Activated CD4-positive, alpha-beta memory T cell treated with anti-CD3 and anti-CD28 coated beads for 36 hours (primary cell): ENCODE measurements at regions of chr5 and their contacts with region 1.

Region 1: DNA sequence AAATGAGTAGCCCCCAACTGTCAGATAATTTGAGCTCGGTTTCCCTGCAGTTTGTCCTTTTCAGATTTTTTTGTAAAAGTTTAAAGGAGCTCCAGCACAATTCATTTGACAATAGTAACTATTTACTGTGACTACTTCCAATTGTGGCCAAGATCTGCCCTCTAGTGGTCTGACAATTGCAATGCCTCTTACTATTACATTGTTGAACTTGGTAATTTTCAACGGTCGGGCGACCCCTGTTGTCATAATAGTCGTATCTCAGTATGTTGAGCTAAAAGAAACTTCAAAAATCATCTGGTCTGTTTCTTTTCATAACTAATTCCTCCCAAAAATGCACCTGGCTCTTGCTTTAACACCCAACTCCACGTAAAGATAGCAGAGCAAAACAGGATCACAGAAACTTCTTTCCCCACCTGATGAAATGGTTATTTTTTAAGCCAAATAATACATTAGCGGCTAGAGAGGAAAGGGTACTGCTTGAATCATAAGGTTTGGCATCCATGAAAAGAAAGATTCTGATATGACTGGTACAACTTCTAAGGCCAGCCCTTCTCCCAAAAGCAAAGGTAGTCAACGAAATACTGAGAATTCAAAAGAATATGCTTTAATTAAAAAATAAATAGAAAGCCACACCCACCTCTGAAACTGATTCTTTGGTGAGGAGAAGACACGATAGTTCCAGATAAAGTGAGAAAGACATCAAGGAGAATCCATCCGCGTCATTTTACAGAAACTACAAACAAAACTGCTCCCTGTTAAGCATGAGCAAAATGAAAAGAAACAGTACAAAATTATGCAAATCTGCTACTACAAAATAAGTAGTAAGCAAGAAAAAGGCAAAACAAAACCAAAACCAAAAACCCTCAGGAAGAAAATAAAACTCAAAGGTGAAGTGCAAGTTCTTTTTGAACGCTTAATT is 76.9 kb upstream of the HTR4 start:
- DNase-seq: peak; percentile 73
- H3K4me3 Mint-ChIP-seq: peak overlapping the region; percentile 47
- H3K27ac Mint-ChIP-seq: no peak overlapping the region
- H3K4me1 Mint-ChIP-seq: peaks cover 12% of the 10 kb centered on the region
- H3K27me3 Mint-ChIP-seq: peaks cover 1% of the 10 kb centered on the region

Region 2: GRCh38 chr5:148179234-148179824 is 551.9 kb before region 1 on chr5:
- CTCF ChIA-PET with region 1: interaction called, 48 read pairs
- POLR2A ChIA-PET with region 1: no interaction called
- intact Hi-C with region 1: loop called (anchors 1 kb)
- DNase-seq: no peak
- H3K4me3 Mint-ChIP-seq: no peak overlapping the region
- H3K27ac Mint-ChIP-seq: no peak overlapping the region
- H3K4me1 Mint-ChIP-seq: no peaks in the 10 kb centered on the region
- H3K27me3 Mint-ChIP-seq: peaks cover 7% of the 10 kb centered on the region

Region 3: DNA sequence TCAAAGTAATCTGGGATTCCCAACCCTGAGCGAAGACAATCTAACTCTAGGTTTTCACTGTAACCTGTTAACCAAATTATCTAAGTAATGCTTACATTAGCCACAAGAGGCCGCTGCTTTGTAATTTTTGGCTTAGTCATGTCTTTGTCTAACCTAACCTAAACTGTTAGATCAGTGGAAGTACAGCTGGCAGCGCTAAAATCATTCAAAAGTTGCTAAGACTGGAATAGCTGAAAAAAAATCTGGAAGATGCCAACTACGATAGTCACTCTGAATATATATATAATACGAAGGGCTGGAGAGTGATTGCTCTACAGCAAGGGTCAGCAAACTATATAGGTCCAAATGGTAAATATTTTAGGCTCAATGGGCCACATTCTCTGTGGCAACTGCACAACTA is 287.2 kb before region 1 on chr5:
- CTCF ChIA-PET with region 1: interaction called, 263 read pairs
- POLR2A ChIA-PET with region 1: interaction called, 3 read pairs
- intact Hi-C with region 1: loop called (anchors 1 kb)
- DNase-seq: peak; percentile 27
- H3K4me3 Mint-ChIP-seq: no peak overlapping the region
- H3K27ac Mint-ChIP-seq: no peak overlapping the region
- H3K4me1 Mint-ChIP-seq: no peaks in the 10 kb centered on the region
- H3K27me3 Mint-ChIP-seq: no peaks in the 10 kb centered on the region

Region 4: DNA sequence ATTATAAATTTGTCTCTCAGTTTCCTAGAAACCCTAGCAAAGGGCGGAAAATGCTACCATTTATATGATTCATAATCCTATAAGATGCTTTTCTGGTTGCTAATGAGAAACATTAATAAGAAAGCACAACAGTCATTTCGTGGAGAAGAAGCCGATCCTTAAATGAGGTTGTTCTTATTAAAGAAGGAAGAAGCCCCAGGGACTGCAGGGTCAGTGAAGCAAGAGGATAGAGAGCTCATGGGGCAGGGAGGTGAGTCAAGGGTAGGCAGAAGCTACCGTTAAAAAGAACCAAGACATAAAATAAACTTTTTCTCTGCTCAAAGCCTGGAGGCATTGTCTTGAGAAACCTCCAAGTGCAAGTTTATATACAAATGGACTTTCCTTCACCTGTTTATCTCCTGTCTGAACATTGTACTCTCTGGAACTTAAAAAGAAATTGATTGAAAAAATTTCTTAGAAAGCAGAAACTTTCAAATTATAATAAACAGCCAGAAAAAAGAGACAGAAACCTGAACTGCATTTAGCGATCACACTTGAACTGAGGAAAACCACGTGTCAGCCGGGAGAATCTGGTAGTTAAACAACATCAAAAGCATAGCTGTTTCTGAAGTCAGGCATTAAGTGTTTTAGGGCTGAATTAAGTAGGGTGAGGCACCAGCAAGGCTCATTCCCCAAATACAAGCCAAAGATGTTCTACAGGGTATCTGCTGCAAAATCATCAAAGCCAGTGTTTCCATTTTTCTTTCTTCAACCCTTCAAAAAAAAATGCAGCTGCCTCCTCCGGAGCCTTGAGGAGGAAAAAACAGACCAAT is 98.7 kb before region 1 on chr5:
- CTCF ChIA-PET with region 1: interaction called, 11 read pairs
- POLR2A ChIA-PET with region 1: no interaction called
- intact Hi-C with region 1: no loop called
- DNase-seq: no peak
- H3K4me3 Mint-ChIP-seq: no peak overlapping the region
- H3K27ac Mint-ChIP-seq: no peak overlapping the region
- H3K4me1 Mint-ChIP-seq: peaks cover 3% of the 10 kb centered on the region
- H3K27me3 Mint-ChIP-seq: peaks cover 11% of the 10 kb centered on the region

Region 5: DNA sequence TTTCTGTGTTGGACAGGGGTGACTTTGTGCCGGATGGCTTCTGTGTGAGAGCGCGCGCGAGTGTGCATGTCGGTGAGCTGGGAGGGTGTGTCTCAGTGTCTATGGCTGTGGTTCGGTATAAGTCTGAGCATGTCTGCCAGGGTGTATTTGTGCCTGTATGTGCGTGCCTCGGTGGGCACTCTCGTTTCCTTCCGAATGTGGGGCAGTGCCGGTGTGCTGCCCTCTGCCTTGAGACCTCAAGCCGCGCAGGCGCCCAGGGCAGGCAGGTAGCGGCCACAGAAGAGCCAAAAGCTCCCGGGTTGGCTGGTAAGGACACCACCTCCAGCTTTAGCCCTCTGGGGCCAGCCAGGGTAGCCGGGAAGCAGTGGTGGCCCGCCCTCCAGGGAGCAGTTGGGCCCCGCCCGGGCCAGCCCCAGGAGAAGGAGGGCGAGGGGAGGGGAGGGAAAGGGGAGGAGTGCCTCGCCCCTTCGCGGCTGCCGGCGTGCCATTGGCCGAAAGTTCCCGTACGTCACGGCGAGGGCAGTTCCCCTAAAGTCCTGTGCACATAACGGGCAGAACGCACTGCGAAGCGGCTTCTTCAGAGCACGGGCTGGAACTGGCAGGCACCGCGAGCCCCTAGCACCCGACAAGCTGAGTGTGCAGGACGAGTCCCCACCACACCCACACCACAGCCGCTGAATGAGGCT is 95.0 kb after region 1 on chr5 and contains the start of gene ADRB2:
- CTCF ChIA-PET with region 1: interaction called, 9 read pairs
- POLR2A ChIA-PET with region 1: no interaction called
- intact Hi-C with region 1: loop called (anchors 5 kb)
- DNase-seq: peak; percentile 93
- H3K4me3 Mint-ChIP-seq: peak within 1 kb of the TSS; percentile 80
- H3K27ac Mint-ChIP-seq: peak within 1 kb of the TSS; percentile 46
- H3K4me1 Mint-ChIP-seq: peaks cover 35% of the 10 kb centered on the region
- H3K27me3 Mint-ChIP-seq: peaks cover 7% of the 10 kb centered on the region
- total RNA-seq, gene ADRB2: 0.36 to 0.52 TPM

Region 6: DNA sequence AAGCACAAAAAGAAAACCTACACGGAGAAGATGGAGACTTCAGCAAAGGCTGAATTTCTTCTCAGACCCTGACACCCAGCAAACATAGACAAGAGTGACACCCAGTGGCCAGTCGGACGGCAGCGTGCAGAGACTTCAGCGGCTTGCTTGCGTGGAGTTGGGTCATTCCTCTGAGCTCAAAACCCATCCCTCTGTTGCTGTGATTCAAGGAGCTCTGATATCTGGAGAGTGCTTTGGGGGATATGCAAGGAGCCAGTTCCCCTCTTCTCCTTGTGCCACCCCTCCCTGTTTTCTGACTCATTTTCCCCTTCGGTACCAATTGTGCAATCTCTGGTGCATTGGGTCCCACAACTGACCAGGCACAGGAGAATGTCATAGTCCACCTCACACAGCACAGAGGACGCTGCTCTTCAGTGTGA is 304.2 kb after region 1 on chr5:
- CTCF ChIA-PET with region 1: interaction called, 393 read pairs
- POLR2A ChIA-PET with region 1: no interaction called
- intact Hi-C with region 1: loop called (anchors 1 kb)
- DNase-seq: peak; percentile 83
- H3K4me3 Mint-ChIP-seq: no peak overlapping the region
- H3K27ac Mint-ChIP-seq: no peak overlapping the region
- H3K4me1 Mint-ChIP-seq: peaks cover 35% of the 10 kb centered on the region
- H3K27me3 Mint-ChIP-seq: no peaks in the 10 kb centered on the region

Region 7: DNA sequence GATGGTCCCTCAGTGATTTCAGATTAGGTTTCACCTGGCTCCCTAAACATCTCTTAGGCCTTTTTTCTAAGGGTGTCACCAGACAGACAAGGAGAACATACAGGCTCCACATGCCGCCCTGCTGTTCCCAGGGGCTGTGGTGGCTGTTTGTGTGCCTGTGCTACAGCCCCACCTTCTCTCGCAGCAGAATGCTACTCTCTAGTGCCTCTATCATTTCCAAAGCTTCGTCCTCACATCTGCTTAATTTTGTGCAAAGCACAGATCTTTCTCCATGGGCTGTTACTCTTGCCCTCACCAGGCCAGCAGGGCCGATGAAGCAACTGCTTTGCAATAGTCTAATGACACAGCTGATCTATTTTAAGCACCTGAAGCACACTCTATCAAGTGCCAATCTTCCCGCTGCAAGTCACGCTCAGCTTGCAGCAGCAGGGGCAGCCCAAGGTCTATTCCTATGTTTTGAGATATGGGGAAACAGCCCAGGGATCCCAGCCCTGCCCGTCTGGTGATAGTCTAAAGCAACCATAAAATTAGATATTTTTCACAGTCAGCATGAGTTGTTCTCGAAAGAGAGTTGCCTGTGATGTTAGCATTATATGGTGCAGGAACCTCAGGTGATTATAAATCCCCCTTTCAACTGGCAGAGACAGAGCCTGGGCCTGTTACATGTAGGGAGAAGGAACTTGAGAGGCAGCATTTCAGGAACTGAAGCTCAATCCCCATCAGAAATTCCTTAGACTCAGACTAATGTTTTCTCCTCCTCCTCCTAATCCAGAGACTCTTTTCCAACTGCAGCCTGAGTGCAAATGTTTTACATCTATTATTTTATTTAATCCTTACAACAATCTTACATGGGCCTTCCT is 422.8 kb after region 1 on chr5:
- CTCF ChIA-PET with region 1: no interaction called
- POLR2A ChIA-PET with region 1: no interaction called
- intact Hi-C with region 1: no loop called
- DNase-seq: no peak
- H3K4me3 Mint-ChIP-seq: no peak overlapping the region
- H3K27ac Mint-ChIP-seq: no peak overlapping the region
- H3K4me1 Mint-ChIP-seq: peaks cover 4% of the 10 kb centered on the region
- H3K27me3 Mint-ChIP-seq: peaks cover 4% of the 10 kb centered on the region